ENCODE measurements at regions of chr18 and their contacts with region 1.

Region 1: GRCh38 chr18:2258954-2259353 is 312.4 kb downstream of the METTL4 start:
- DNase-seq: no peak
- ATAC-seq: no peak
- H3K4me3 ChIP-seq: no peak overlapping the region
- H3K27ac ChIP-seq: no peak overlapping the region
- H3K4me1 ChIP-seq: no peaks in the 10 kb centered on the region
- H3K27me3 ChIP-seq: no peaks in the 10 kb centered on the region
- CTCF ChIP-seq: no peak
- POLR2A ChIP-seq: no peak

Region 2: DNA sequence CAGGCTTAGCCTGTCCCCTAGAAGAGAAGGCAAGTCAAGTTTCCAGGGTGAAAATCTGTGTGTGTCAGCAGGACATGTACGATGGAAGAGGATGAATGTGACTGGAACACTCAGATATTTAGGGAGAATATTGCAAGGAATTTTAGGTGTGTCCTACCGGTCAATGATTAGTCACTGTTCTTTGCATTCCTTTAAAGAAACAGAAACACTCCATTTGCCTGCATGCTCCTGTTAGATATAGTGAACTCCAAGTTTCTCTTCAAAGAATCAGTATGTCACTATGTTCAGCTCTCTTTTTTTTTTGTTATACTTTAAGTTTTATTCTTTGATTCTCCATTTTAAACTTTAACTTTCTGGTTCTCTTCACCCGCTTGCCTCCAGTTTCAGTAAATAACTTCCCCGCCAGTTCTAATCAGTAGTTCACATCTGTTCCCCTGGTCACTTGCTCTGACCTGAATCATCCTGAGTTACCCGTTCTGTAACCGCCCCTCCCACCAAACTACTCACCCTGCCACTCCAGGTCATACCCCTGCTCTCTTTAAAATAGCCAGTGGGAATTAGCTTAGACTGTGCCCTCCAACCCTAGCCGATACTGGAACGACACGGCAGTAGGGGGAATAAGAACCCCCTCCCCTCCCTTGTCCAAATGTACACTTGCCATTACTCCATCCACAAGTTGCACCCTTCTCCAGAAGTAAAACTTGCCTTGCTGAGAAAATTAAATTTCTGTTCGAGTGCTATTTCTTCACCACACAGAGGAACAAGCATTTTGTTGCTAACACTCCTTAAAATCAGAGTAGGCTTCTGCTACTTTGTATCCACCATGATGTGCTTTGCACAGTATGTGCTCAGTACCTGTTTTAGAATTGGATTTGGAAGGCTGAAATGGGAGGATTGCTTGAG is 43.9 kb after region 1 on chr18:
- in situ Hi-C with region 1: no loop called
- intact Hi-C with region 1: no loop called
- DNase-seq: no peak
- ATAC-seq: no peak
- H3K4me3 ChIP-seq: no peak overlapping the region
- H3K27ac ChIP-seq: no peak overlapping the region
- H3K4me1 ChIP-seq: no peaks in the 10 kb centered on the region
- H3K27me3 ChIP-seq: no peaks in the 10 kb centered on the region
- CTCF ChIP-seq: no peak
- POLR2A ChIP-seq: no peak

Region 3: DNA sequence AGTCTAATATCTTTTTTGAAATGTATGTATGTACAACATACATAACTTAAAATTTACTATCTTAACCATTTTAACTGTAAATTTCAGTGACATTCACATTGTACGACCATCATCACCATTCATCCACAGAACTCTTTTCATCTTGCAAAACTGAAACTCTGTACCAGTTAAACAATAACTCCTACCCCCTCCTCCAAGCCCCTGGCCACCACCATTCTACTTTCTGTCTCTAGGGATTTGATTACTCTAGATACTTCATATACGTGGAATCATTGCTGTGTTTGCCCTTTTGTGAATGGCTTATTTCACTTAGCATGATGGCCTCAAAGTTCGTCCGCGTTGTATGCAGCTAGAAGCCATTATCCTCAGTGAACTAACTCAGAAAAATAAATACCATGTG is 95.3 kb after region 1 on chr18:
- in situ Hi-C with region 1: loop called in 1 of 4 experiments (anchors 25 kb)
- intact Hi-C with region 1: no loop called
- DNase-seq: no peak
- ATAC-seq: no peak
- H3K4me3 ChIP-seq: no peak overlapping the region
- H3K27ac ChIP-seq: no peak overlapping the region
- H3K4me1 ChIP-seq: no peaks in the 10 kb centered on the region
- H3K27me3 ChIP-seq: no peaks in the 10 kb centered on the region
- CTCF ChIP-seq: no peak
- POLR2A ChIP-seq: no peak

Measured in gastrocnemius medialis (tissue), 4 donors.